ENCODE measurements at regions of chr7 and their contacts with region 1.

Region 1: DNA sequence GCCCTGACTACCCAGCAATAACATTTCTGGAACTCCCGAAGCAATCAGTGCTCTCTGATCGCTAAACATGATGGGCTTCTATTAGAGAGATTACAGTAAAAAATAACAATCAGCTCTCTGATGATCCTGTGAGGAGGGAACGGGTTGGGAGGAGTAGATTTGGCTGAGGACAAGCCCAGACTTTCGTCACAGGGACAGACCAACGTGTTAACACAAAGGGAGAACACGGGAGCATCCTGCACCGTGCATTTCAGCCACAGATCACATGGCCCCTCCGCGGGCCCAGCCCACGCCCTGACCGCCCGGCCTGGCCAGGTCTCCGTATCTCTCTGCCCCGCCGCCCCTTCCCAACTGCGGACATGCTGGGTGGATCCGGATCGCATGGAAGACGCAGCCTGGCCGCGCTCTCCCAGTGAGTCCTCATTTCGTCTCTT is 95.0 kb upstream of the AGBL3 start:
- DNase-seq: peak; percentile 88 to 92 (median 88)
- ATAC-seq: peak; percentile 88 to 93 (median 91)
- H3K4me3 ChIP-seq: peak overlapping the region; percentile 41 to 70 (median 60)
- H3K27ac ChIP-seq: peak overlapping the region; percentile 69 to 94 (median 84)
- H3K4me1 ChIP-seq: peaks cover 8 to 71% (median 46%) of the 10 kb centered on the region in 12 donors
- H3K27me3 ChIP-seq: no peaks in the 10 kb centered on the region
- CTCF ChIP-seq: no peak
- POLR2A ChIP-seq: peak in 1 of 2 donors; percentile 36

Region 2: DNA sequence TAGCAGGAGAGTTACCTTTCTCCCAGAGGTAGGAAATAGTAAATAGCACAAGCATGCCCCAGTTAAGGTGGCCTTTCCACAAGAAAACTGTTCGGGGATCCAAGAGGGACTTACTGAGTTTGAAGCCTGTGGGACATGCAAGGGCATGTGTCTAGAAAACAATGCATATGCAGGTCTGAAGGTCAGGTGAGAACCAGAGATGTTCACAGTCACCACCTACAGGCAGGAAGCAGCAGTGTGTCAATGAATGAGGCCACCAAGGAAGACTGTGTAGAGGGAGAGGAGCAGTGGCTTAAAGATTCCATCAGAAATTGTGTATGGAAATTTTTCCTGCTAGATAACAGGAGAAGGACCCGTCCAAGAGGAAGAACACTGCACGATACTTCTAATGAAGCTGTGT is 45.8 kb before region 1 on chr7:
- intact Hi-C with region 1: no loop called
- DNase-seq: no peak
- ATAC-seq: peak in 1 of 4 donors; percentile 28
- H3K4me3 ChIP-seq: no peak overlapping the region
- H3K27ac ChIP-seq: peak overlapping the region in 2 of 12 donors; percentile 9 to 77
- H3K4me1 ChIP-seq: peaks cover 0 to 78% (median 54%) of the 10 kb centered on the region in 12 donors
- H3K27me3 ChIP-seq: no peaks in the 10 kb centered on the region
- CTCF ChIP-seq: peak in 5 of 12 donors; percentile 7 to 39 (median 25)
- POLR2A ChIP-seq: no peak

Region 3: GRCh38 chr7:134926396-134926795 is 35.1 kb after region 1 on chr7:
- intact Hi-C with region 1: loop called in 8 of 10 experiments (anchors 5 kb)
- DNase-seq: no peak
- ATAC-seq: no peak
- H3K4me3 ChIP-seq: no peak overlapping the region
- H3K27ac ChIP-seq: peak overlapping the region in 2 of 12 donors; percentile 7 to 14
- H3K4me1 ChIP-seq: peaks cover 0 to 45% (median 20%) of the 10 kb centered on the region in 12 donors
- H3K27me3 ChIP-seq: no peaks in the 10 kb centered on the region
- CTCF ChIP-seq: no peak
- POLR2A ChIP-seq: no peak

Region 4: DNA sequence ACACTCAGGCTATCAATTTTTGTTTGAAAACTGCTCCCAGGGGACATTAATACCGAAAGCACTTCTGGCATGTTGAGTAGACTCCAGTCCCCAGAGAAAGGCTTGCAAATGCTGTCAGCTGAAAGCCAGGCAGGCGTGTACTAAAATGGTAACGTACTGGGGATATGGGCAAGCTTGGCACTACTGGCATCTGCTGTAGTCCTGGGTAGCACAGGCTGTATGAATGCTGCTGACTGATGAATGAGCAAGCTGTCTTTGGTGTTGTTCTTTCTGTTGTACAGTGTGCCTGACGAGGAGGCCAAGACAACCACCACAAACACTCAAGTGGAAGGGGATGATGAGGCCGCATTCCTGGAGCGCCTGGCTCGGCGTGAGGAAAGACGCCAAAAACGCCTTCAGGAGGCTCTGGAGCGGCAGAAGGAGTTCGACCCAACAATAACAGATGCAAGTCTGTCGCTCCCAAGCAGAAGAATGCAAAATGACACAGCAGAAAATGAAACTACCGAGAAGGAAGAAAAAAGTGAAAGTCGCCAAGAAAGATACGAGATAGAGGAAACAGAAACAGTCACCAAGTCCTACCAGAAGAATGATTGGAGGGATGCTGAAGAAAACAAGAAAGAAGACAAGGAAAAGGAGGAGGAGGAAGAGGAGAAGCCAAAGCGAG is 41.6 kb after region 1 on chr7:
- intact Hi-C with region 1: loop called in 9 of 10 experiments (anchors 5 kb)
- DNase-seq: peak; percentile 57 to 77 (median 60)
- ATAC-seq: peak; percentile 81 to 90 (median 88)
- H3K4me3 ChIP-seq: peak overlapping the region in 7 of 12 donors; percentile 0 to 32 (median 14)
- H3K27ac ChIP-seq: peak overlapping the region in 11 of 12 donors; percentile 38 to 84 (median 75)
- H3K4me1 ChIP-seq: peaks cover 0 to 66% (median 48%) of the 10 kb centered on the region in 12 donors
- H3K27me3 ChIP-seq: no peaks in the 10 kb centered on the region
- CTCF ChIP-seq: no peak
- POLR2A ChIP-seq: no peak